Heart right ventricle (tissue), 16 donors: ENCODE measurements at regions of chr2 and their contacts with region 1.

Region 1: DNA sequence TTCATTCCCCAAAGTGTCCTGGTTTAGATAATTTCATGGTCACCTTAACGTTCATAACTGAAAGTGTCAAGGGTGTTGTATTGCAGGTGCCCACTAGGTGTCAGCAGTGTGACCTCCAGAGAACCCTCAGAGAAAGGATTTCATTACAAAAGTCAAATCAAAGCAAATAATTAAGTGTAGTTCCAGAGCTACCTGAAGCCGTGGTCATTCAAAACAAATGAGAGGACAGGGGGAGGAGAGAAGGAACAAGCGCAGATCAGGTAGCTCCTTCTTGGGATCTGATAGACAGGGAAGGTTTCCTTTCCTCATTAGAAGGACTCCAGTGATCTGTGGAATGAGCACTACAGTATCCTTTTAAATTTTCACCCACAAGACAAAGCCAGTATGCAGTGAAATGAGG is at the start of gene SLC9A4:
- DNase-seq: no peak
- ATAC-seq: peak in 1 of 8 donors; percentile 55
- H3K4me3 ChIP-seq: no peak within 1 kb of the TSS
- H3K27ac ChIP-seq: no peak within 1 kb of the TSS
- H3K4me1 ChIP-seq: no peaks in the 10 kb centered on the region
- H3K27me3 ChIP-seq: peaks cover 0 to 53% (median 22%) of the 10 kb centered on the region in 7 donors
- CTCF ChIP-seq: peak; percentile 49 to 85 (median 84)
- total RNA-seq, gene SLC9A4: 0.07 TPM in 1 of 10 donors, not detected in the others

Region 2: DNA sequence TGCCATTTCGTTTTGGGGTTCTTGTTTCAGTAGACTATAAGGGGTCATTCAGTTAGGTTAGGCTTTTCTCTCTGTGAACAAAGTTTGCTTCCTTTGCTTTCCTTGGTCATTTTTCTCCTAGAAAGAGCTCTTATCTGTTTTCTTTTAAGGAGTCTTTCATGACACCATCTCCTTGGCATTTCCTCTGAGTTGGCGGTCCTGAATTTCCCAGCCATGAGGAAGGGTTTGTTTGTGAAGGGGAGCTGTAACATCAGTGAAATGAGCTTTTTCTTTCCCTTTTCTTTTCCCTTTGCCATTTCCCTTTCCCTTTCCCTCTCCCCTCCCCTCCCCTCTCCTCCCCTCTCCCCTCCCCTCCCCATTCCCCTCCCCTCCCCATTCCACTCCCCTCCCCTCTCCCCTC is 713.9 kb before region 1 on chr2:
- intact Hi-C with region 1: no loop called
- DNase-seq: peak in 1 of 2 donors; percentile 54
- ATAC-seq: peak in 7 of 8 donors; percentile 30 to 71 (median 53)
- H3K4me3 ChIP-seq: no peak overlapping the region
- H3K27ac ChIP-seq: peak overlapping the region in 5 of 10 donors; percentile 27 to 65 (median 49)
- H3K4me1 ChIP-seq: peaks cover 27 to 83% (median 75%) of the 10 kb centered on the region in 9 donors
- H3K27me3 ChIP-seq: no peaks in the 10 kb centered on the region
- CTCF ChIP-seq: no peak

Region 3: DNA sequence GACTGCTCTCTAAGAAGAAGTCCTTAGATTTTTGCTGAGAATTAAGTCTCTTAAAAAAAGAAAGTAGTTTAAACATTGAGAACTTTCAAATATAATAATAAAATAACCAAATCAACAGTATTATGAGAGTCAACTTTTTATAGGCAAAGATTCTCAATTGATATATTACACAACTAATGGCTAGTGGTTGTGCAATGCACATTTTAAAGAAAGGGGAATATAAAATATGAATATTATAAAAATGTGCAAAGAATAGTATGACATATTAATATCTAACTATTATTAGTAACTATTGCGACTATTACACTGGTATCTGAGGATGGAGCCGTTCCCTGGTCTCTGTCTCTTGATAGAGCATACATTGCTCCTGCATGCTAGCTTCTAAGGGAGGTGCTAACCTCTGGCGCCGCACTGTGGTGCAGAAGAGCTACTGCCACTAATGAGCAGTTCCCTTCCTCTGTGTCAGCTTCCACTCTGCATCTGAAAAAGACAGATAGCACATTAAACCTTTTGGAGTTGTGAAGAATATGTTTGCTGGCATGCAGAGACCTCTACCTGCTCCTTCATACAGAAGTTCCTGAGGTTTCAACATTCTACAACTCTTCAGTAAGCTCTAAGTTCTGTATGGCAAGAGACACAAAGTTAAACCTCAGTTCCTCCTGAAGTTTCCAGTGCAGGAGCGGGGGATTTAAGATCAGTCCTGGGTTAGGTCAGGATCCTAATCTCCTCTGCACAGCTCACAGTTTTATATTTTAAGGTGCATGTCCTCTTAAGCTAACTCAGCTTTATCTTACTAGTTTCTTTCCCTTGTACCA is 142.8 kb after region 1 on chr2:
- intact Hi-C with region 1: loop called in 7 of 10 experiments (anchors 2 to 10 kb)
- DNase-seq: peak; percentile 7 to 28
- ATAC-seq: peak in 4 of 8 donors; percentile 57 to 81 (median 70)
- H3K4me3 ChIP-seq: no peak overlapping the region
- H3K27ac ChIP-seq: no peak overlapping the region
- H3K4me1 ChIP-seq: peaks cover 0 to 16% (median 12%) of the 10 kb centered on the region in 9 donors
- H3K27me3 ChIP-seq: peaks cover 0 to 84% (median 43%) of the 10 kb centered on the region in 7 donors
- CTCF ChIP-seq: peak; percentile 19 to 86 (median 73)

Region 4: GRCh38 chr2:102698369-102699111 is 225.5 kb after region 1 on chr2:
- intact Hi-C with region 1: loop called in 9 of 10 experiments (anchors 2 to 10 kb)
- DNase-seq: no peak
- ATAC-seq: no peak
- H3K4me3 ChIP-seq: no peak overlapping the region
- H3K27ac ChIP-seq: no peak overlapping the region
- H3K4me1 ChIP-seq: no peaks in the 10 kb centered on the region
- H3K27me3 ChIP-seq: peaks cover 0 to 23% (median 8%) of the 10 kb centered on the region in 7 donors
- CTCF ChIP-seq: no peak

Region 5: GRCh38 chr2:102703748-102704147 is 230.7 kb after region 1 on chr2:
- intact Hi-C with region 1: loop called (anchors 2 to 10 kb)
- DNase-seq: no peak
- ATAC-seq: peak in 4 of 8 donors; percentile 52 to 69 (median 60)
- H3K4me3 ChIP-seq: no peak overlapping the region
- H3K27ac ChIP-seq: no peak overlapping the region
- H3K4me1 ChIP-seq: no peaks in the 10 kb centered on the region
- H3K27me3 ChIP-seq: peaks cover 0 to 52% (median 30%) of the 10 kb centered on the region in 7 donors
- CTCF ChIP-seq: peak in 7 of 9 donors; percentile 34 to 55 (median 42)